WTC11 (cell line): ENCODE measurements at regions of chr11 and their contacts with region 1.

Region 1: DNA sequence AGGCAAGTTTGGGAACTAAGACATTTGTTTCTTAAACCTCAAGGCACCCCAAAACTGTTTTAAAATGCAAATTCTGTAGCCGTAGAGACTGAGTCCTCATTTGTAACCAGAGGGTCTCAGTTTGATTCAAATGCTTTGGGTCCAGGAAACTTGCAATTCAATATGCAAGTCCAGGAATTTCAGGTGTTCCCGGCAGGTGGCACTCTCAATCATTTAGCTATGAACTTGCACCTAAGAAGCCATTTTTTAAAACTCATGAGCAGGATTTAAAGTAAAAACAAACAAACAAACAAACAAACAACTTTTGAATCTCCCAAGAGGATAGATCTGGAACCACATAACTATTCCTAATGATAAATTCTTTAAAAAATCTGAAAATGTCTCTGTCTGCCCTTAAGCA is 8.7 kb upstream of the ABTB2 start:
- DNase-seq: peak; percentile 19
- ATAC-seq: no peak
- H3K4me3 Mint-ChIP-seq: no peak overlapping the region
- H3K27ac Mint-ChIP-seq: 0 out of 2 replicates have a peak overlapping the region, but pooled peaks have one; percentile 41
- H3K4me1 Mint-ChIP-seq: peaks cover 11% of the 10 kb centered on the region
- H3K27me3 Mint-ChIP-seq: no peaks in the 10 kb centered on the region
- CTCF ChIP-seq: no peak

Region 2: DNA sequence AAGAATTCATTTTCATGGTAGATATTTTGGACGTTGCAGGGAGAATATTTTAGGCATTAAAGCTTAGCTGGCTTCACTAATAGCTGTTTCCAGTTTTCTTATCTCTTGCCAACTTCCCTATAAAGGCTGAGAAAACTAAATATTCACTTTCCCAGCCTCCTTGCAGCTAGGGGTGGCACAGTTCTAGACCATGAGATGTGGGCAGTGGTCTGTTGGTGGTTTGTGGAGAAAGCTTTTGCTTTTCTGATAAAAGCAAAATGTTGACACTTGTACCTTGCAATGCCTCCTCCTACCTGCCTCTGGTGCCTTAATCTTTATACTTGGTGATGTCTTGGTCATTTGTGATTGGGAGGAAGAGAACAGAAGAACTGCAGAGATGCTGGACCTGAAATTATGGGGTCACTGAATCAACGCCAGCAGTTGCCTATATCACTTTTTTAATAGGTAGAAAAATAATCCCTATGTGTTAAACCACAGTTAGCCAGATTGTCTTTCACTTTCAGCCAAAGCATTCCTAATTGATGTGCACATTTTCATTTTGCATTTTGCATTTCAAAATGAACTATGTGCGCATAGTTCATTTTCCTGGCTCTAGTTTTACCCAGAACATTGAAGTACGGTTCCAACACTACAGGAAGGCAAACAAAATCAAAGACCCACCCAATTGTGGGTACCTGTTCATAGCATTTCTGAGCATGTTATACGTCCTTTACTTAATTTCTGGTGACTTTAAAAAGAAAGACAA is 16.2 kb after region 1 on chr11:
- CTCF ChIA-PET with region 1: no interaction called
- POLR2A ChIA-PET with region 1: no interaction called
- DNase-seq: no peak
- ATAC-seq: no peak
- H3K4me3 Mint-ChIP-seq: no peak overlapping the region
- H3K27ac Mint-ChIP-seq: no peak overlapping the region
- H3K4me1 Mint-ChIP-seq: no peaks in the 10 kb centered on the region
- H3K27me3 Mint-ChIP-seq: 0 out of 2 replicates have a peak, but pooled peaks cover under 1% of the 10 kb centered on the region
- CTCF ChIP-seq: no peak

Region 3: GRCh38 chr11:34468209-34468841 is 101.8 kb after region 1 on chr11:
- CTCF ChIA-PET with region 1: interaction called, 14 read pairs
- POLR2A ChIA-PET with region 1: no interaction called
- DNase-seq: peak; percentile 38
- ATAC-seq: peak; percentile 71
- H3K4me3 Mint-ChIP-seq: no peak overlapping the region
- H3K27ac Mint-ChIP-seq: no peak overlapping the region
- H3K4me1 Mint-ChIP-seq: no peaks in the 10 kb centered on the region
- H3K27me3 Mint-ChIP-seq: no peaks in the 10 kb centered on the region
- CTCF ChIP-seq: peak; percentile 47; the same call in 1 of the 2 replicates

Region 4: DNA sequence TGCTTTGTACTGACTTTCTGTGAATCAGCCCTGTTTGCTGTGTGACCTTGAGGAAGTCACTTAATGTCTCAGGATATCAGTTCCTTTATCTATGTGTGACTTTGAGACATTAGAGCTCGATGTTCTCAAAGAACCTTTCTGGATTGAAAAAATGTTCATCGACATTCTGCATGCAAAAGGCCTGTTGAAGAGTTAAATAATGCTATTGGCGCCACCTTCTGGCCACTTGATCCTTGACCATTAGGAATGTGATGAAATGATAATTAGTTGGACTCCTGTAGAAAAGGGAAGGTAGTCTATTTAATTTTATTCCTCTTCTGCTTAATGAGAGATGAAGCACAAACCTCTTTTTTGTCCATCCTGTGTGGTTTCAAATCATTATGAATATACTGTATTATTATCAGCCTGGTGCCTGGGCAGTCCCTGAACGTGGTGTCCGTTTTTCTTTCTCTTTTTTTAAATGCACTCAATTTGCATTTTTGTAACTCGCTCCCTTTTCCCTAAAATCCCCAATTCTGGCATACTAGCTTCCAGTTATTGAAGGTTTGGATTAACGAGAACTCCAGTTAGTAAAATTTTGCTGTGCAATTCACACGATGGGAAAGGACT is 126.4 kb after region 1 on chr11:
- CTCF ChIA-PET with region 1: interaction called, 16 read pairs
- POLR2A ChIA-PET with region 1: no interaction called
- DNase-seq: peak; percentile 57
- ATAC-seq: peak; percentile 50; the same call in 1 of the 2 replicates
- H3K4me3 Mint-ChIP-seq: no peak overlapping the region
- H3K27ac Mint-ChIP-seq: no peak overlapping the region
- H3K4me1 Mint-ChIP-seq: no peaks in the 10 kb centered on the region
- H3K27me3 Mint-ChIP-seq: no peaks in the 10 kb centered on the region
- CTCF ChIP-seq: peak; percentile 47; the same call in 1 of the 2 replicates